Panc1 (cell line): ENCODE measurements at regions of chr21 and their contacts with region 1.

Region 1: GRCh38 chr21:15592271-15592860 is 137.4 kb upstream of the USP25 start:
- DNase-seq: peak; percentile 15
- ATAC-seq: no peak
- H3K4me3 ChIP-seq: no peak overlapping the region
- H3K27ac ChIP-seq: no peak overlapping the region
- H3K4me1 ChIP-seq: no peaks in the 10 kb centered on the region
- H3K27me3 ChIP-seq: no peaks in the 10 kb centered on the region
- CTCF ChIP-seq: peak; percentile 49; the same call in 1 of the 2 replicates

Region 2: GRCh38 chr21:14403681-14404318 is 1188.6 kb before region 1 on chr21:
- CTCF ChIA-PET with region 1: no interaction called
- POLR2A ChIA-PET with region 1: no interaction called
- in situ Hi-C with region 1: no loop called
- intact Hi-C with region 1: loop called (anchors 2 kb)
- DNase-seq: no peak
- ATAC-seq: no peak
- H3K4me3 ChIP-seq: no peak overlapping the region
- H3K27ac ChIP-seq: no peak overlapping the region
- H3K4me1 ChIP-seq: no peaks in the 10 kb centered on the region
- H3K27me3 ChIP-seq: no peaks in the 10 kb centered on the region
- CTCF ChIP-seq: peak; percentile 62; the same call in 1 of the 2 replicates

Region 3: DNA sequence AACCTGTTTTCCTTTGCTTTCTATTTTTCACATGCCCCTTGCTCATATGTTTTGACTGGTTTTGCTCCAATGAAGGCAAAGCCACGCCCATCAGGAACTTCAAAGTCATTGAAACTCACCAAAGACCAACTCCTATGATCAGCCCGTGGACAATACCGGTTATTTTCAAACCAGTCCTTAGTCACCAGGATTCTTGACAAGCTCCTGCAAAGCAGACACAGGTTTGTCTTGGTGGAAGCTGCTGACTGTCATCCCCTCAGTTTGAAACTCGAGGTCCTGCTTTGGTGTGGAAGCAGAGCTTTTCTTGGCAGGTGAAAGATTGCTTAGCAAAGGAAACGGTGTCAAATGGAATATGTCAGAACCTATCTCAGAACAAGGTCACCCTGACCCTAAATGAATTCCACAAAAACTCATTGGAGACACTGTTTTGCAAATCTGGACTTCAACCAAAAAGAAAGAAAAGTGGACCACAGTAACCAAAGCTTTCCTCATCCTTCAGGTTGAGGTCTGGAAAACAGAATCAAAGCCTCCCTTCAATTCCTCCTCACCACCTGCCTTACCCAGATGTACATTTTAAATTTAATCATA is 1535.9 kb after region 1 on chr21:
- CTCF ChIA-PET with region 1: no interaction called
- POLR2A ChIA-PET with region 1: no interaction called
- in situ Hi-C with region 1: no loop called
- intact Hi-C with region 1: no loop called
- DNase-seq: no peak
- ATAC-seq: no peak
- H3K4me3 ChIP-seq: no peak overlapping the region
- H3K27ac ChIP-seq: no peak overlapping the region
- H3K4me1 ChIP-seq: no peaks in the 10 kb centered on the region
- H3K27me3 ChIP-seq: no peaks in the 10 kb centered on the region
- CTCF ChIP-seq: no peak